Motor neuron (in vitro differentiated cells): ENCODE measurements at regions of chr15 and their contacts with region 1.

Region 1: GRCh38 chr15:66386204-66387123 is at the start of gene MAP2K1:
- ATAC-seq: peak; percentile 86 to 93 (median 92)
- H3K4me3 ChIP-seq: peak within 1 kb of the TSS; percentile 50 to 81 (median 59)
- H3K27ac ChIP-seq: peak within 1 kb of the TSS; percentile 65 to 71
- H3K4me1 ChIP-seq: peaks cover 12% of the 10 kb centered on the region in 2 donors
- total RNA-seq, gene MAP2K1: 19.8 to 38.6 (median 24.6) TPM

Region 2: DNA sequence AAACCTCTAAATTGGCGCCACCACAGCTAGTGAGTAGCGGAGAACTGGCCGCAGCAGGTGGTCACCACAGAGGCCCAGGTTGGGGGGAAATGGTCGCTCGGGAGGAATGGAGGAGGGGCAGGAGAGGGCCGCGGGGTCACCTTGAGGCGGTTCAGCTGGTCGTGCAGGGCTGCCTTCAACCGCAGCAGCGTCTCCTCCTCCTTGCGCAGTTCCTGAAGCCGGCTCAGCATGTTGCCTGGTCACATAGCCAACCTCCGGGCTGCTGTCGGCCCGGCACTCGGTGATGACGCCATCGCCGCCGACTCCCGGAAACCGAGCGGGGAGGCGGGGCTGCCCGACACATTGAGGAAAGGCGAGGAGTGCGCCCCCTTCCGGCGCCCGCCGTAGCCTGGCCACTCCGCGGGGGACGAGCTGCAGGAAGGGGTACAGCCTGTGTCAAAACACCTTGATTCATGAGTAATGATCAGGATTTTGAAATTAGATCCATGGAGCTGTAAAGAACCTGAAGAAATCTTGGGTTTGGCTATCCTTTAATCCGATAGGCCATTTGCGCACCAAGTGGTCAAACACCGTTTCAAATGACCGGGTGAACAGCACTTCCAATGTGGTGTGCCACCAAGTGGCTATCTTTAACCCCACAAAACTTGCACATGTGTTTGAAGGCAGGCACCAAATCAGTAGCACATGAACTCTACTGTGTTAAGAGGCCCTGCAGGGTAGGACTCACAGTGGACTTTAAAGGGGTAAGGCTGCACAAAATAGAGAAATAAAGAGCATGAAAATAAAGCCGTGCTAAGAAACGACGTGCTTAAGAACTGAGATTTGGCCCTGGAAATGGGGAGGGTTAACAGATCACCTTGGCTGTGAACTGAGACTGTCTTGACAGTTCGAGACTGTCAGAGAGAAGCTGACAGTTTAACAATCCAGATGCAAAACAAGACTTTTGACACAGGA is 111.3 kb after region 1 on chr15 and contains the start of gene SNAPC5:
- in situ Hi-C with region 1: loop called in 1 of 9 experiments (anchors 25 kb)
- ATAC-seq: peak; percentile 74 to 94 (median 92)
- H3K4me3 ChIP-seq: peak within 1 kb of the TSS; percentile 53 to 91 (median 71)
- H3K27ac ChIP-seq: peak within 1 kb of the TSS; percentile 53 to 88
- H3K4me1 ChIP-seq: peaks cover 8 to 13% of the 10 kb centered on the region in 2 donors
- total RNA-seq, gene SNAPC5: 23.8 to 43.1 (median 31.7) TPM